ENCODE measurements at regions of chr12 and their contacts with region 1.

Region 1: GRCh38 chr12:5428332-5429221 is 3.3 kb upstream of the NTF3 start:
- DNase-seq: no peak
- ATAC-seq: no peak
- H3K4me3 Mint-ChIP-seq: no peak overlapping the region
- H3K27ac Mint-ChIP-seq: no peak overlapping the region
- H3K4me1 Mint-ChIP-seq: peaks cover 14% of the 10 kb centered on the region
- H3K27me3 Mint-ChIP-seq: peaks cover 35% of the 10 kb centered on the region

Region 2: DNA sequence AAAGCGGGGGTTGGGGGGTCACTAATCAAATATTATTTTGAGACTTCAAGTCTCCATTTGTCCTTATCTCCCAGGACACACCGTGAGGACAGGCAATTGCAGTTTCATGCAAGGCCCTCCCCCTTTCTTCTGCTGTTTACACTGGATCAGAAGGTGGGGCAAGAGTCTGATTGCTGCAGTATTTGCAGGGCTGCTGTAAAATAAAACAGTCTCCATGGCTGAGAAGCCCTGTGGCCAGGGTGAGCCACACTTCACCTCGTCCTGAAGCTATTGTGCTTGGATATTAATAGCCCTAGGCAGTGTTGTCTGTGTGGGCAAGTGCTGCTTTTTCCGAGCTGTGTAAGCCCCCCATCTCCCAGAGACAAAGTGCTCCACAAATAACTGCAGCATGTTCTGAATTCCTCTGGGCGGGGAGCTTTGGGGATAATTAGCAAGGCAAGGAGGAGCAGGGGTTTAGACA is 184.0 kb before region 1 on chr12:
- CTCF ChIA-PET with region 1: no interaction called
- POLR2A ChIA-PET with region 1: no interaction called
- intact Hi-C with region 1: no loop called
- DNase-seq: no peak
- ATAC-seq: no peak
- H3K4me3 Mint-ChIP-seq: no peak overlapping the region
- H3K27ac Mint-ChIP-seq: no peak overlapping the region
- H3K4me1 Mint-ChIP-seq: no peaks in the 10 kb centered on the region
- H3K27me3 Mint-ChIP-seq: peaks cover 4% of the 10 kb centered on the region

Region 3: DNA sequence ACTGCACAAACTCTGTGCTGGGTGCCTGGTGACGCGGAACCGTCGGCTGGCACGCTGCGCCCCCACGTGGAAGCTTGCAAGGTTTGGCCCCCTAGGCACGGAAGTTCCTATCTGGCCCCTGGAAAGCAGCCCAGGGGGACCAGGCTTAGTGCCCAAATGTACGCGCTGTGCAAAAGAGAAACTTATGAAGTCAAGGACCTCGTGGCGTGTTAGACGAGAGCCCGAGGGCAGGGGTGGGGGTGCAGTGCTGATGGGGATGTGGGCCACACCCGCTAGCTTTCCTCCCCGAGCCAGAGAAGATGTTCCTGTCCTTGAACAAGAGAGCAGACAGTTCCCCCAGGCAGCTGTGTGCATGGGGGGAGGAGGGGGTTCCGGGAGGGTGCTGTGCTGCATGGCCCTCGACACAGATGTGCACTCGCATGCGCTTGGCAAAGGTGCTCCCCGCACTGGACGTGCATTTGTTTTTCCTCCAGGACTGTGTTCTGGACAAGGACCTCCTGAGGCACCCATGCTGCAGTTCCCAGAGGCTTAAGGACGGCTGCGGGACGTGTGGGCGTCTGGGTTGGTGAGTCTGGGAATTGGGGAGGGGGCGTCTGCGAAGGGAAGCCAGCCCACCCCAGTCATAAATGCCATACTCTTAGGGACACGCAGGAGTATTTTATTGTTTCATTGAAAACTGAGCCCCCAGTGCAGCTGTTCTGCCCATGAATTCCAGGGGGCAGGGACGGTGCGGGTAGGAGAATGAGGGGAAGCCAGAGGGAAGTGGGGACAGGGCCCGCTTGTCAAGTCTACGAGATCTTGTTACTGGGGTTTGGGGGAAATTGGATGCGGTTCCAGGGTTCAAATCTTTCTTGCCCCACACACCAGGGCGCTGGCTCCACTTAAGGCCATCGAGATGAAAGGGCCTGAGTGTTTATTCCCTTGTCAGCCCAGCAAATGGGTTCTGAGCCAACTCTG is 83.3 kb after region 1 on chr12:
- CTCF ChIA-PET with region 1: no interaction called
- POLR2A ChIA-PET with region 1: no interaction called
- intact Hi-C with region 1: loop called in 1 of 2 experiments (anchors 5 kb)
- DNase-seq: peak; percentile 50
- ATAC-seq: no peak
- H3K4me3 Mint-ChIP-seq: no peak overlapping the region
- H3K27ac Mint-ChIP-seq: no peak overlapping the region
- H3K4me1 Mint-ChIP-seq: no peaks in the 10 kb centered on the region
- H3K27me3 Mint-ChIP-seq: peaks cover 8% of the 10 kb centered on the region

Region 4: GRCh38 chr12:5796171-5796958 is 367.8 kb after region 1 on chr12:
- CTCF ChIA-PET with region 1: no interaction called
- POLR2A ChIA-PET with region 1: no interaction called
- intact Hi-C with region 1: loop called in 1 of 2 experiments (anchors 5 kb)
- DNase-seq: peak; percentile 64
- ATAC-seq: peak; percentile 57
- H3K4me3 Mint-ChIP-seq: no peak overlapping the region
- H3K27ac Mint-ChIP-seq: no peak overlapping the region
- H3K4me1 Mint-ChIP-seq: no peaks in the 10 kb centered on the region
- H3K27me3 Mint-ChIP-seq: peaks cover 3% of the 10 kb centered on the region

Region 5: DNA sequence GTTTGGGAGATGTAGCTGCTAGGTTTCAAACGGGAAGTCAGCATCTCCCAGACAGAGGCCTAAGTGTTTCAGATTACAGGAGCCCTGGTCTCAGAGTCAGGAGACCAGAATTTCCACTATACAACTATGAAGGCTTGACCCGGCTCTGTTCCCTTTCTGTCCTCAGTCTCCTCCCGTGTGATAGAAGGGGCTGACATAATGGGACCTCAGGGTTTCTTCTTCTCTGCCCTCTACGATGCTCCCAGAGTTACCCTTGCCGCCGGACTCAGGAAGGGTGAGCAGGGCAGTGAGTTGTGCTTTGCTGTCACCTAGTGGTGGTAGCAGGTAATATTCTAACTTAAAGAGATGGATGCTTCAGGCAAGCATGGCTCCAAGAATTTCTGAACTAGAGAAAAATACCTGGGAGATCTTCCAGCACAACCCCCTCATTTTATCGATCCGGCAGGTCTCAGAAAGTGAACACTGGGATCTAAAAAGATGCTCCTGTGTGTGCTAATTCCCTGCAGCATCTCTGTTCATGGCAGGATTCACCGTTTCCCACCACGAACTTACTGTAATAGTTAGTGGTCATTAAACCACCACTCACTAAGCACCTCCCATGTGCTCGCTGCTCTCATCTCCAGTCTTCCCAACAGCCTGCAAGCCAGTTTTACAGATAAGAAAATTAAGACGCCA is 611.5 kb after region 1 on chr12:
- CTCF ChIA-PET with region 1: no interaction called
- POLR2A ChIA-PET with region 1: no interaction called
- intact Hi-C with region 1: no loop called
- DNase-seq: peak; percentile 72
- ATAC-seq: peak; percentile 85
- H3K4me3 Mint-ChIP-seq: no peak overlapping the region
- H3K27ac Mint-ChIP-seq: no peak overlapping the region
- H3K4me1 Mint-ChIP-seq: peaks cover 2% of the 10 kb centered on the region
- H3K27me3 Mint-ChIP-seq: no peaks in the 10 kb centered on the region

Measured in activated CD4-positive, alpha-beta T cell treated with anti-CD3 and anti-CD28 coated beads for 36 hours (primary cell).